Body of pancreas (tissue), 4 donors: ENCODE measurements at regions of chr12 and their contacts with region 1.

Region 1: DNA sequence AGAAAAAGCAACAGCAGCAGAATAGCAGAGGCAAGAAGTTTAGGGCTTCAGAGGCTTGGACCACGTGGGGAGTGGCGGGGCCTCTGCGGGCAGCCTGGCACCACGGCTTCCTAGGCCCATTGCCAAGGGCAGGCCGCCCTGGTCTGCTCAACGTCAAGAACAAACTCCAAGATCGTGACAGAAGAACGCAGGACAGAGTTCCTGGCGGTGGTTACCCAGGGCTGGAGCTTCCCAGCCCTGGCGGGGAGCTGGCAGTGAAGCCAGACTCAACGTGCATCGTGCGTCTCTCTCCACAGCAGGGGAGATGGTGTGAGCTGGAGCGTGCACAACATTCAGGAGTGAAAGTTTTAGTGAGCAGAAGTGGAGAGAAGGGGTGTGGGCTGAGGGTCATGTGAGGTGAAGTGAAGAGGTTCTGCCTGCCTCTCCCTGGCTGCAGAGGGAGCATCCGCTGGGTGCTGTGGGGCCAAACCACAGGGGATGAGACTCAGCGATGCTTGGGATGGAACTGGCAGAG is 13.9 kb upstream of the CACNA2D4 start:
- DNase-seq: peak in 2 of 4 donors; percentile 42 to 49
- ATAC-seq: no peak
- H3K4me3 ChIP-seq: no peak overlapping the region
- H3K27ac ChIP-seq: no peak overlapping the region
- H3K4me1 ChIP-seq: peaks cover 26% of the 10 kb centered on the region
- H3K27me3 ChIP-seq: no peaks in the 10 kb centered on the region
- CTCF ChIP-seq: no peak
- POLR2A ChIP-seq: no peak

Region 2: DNA sequence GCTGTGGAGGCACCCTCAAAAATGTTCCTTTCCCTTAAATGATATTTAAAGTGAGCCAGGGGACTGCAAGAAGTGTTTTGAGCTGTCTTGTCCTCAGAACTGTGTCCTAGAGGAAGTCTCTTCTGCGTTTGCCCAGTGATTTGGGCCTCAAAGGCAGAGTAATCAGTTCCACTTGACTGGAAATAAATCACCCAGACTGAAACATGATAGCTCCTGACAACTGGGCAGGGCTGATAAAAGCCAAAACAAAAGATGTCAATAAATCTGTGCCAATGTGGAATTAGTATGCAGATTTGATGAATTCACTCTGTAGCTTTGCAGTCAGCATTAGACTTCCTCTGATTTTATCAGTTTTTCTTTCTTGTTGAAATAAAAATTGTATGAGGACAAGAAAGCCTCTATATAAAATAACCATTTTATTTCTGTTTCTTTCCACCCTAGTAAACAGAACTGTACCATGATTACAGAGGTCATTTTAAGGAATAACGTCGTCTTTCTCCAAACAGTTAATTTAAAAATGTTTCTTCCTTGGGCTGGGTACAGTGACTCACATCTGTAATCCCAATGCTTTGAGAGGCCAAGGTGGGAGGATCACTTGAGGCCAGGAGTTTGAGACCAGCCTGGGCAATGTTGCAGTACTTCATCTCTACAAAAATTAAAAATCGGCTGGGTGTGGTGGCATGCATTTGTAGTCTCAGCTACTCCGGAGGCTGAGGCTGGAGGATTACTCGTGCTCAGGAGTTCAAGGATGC is 760.5 kb before region 1 on chr12:
- intact Hi-C with region 1: no loop called
- DNase-seq: no peak
- ATAC-seq: no peak
- H3K4me3 ChIP-seq: no peak overlapping the region
- H3K27ac ChIP-seq: no peak overlapping the region
- H3K4me1 ChIP-seq: no peaks in the 10 kb centered on the region
- H3K27me3 ChIP-seq: no peaks in the 10 kb centered on the region
- CTCF ChIP-seq: no peak
- POLR2A ChIP-seq: no peak

Region 3: DNA sequence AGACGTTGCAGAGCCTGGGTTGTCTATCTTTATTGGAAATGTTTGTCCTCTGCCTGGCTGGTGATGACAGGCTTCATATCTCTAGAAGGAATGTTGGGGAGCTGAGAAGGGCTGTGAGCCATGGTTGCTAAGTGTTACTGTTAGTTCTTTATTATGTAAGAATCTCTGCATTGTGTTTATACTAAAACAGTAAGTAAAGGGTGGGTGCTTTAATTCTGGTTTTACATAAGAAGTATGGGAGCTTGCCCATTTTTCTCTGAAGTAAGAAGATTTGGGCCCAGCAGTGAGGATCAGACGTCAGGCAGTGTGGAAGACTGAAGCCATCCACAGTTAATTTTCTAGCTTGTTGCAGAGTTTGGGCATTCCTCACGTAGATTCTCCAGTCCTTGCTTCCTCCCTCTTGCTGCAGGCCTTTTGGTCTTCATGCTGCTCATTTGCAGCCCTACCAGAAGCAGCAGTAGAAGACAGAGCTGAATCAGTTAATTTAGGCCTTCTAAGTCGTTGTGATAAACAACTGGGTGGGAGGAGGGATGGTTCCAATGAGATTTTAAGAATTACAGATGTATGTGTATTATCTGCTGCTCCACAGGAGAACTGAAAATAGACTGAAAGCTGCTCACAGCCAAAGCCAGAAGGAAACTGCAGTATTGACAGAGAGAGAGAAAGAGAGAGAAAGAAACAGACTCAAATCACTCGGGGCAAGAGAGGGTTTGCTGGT is 281.9 kb before region 1 on chr12:
- intact Hi-C with region 1: loop called (anchors 5 kb)
- DNase-seq: no peak
- ATAC-seq: no peak
- H3K4me3 ChIP-seq: no peak overlapping the region
- H3K27ac ChIP-seq: no peak overlapping the region
- H3K4me1 ChIP-seq: no peaks in the 10 kb centered on the region
- H3K27me3 ChIP-seq: no peaks in the 10 kb centered on the region
- CTCF ChIP-seq: no peak
- POLR2A ChIP-seq: no peak

Region 4: DNA sequence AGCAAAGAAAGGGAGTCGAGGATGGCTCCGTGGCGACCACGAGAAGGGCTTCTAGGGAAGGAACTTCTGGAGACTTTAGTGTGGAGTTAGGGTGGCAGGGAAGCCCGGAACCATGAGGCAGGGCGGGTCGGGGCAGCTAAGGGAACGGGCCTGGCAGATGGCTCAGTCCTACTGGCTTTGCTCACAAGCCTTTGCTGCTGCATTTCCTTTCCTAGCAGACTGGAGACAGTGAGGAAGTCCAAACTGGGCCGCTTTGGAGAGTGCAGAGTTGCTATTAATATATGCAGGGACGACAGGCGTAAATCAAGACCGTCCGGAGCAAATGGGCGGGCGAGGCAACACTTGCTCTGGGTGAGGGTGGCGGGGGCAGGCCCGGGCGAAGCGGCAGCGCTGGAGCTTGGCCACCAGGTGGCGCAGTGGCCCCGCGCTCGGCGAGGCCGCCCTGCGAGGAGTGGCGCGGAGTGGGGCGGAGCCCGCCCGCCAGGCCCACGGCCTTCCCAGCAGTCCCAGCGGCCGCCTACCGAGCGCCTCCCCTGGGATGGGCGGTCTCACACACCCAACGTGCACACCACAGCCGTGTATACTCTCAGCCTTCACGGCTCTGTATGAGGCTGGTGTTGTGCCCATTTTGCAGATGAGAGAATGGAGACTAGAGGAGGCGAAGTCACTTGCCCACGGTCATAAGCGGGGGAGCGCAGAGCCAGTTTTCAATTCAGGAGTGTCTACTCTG is 136.4 kb before region 1 on chr12:
- intact Hi-C with region 1: loop called (anchors 5 kb)
- DNase-seq: peak; percentile 92 to 95 (median 94)
- ATAC-seq: peak; percentile 95
- H3K4me3 ChIP-seq: peak overlapping the region; percentile 1 to 3
- H3K27ac ChIP-seq: peak overlapping the region; percentile 32 to 80 (median 58)
- H3K4me1 ChIP-seq: peaks cover 21% of the 10 kb centered on the region
- H3K27me3 ChIP-seq: no peaks in the 10 kb centered on the region
- CTCF ChIP-seq: peak; percentile 79 to 99 (median 98)
- POLR2A ChIP-seq: peak; percentile 49 to 76 (median 72)

Region 5: DNA sequence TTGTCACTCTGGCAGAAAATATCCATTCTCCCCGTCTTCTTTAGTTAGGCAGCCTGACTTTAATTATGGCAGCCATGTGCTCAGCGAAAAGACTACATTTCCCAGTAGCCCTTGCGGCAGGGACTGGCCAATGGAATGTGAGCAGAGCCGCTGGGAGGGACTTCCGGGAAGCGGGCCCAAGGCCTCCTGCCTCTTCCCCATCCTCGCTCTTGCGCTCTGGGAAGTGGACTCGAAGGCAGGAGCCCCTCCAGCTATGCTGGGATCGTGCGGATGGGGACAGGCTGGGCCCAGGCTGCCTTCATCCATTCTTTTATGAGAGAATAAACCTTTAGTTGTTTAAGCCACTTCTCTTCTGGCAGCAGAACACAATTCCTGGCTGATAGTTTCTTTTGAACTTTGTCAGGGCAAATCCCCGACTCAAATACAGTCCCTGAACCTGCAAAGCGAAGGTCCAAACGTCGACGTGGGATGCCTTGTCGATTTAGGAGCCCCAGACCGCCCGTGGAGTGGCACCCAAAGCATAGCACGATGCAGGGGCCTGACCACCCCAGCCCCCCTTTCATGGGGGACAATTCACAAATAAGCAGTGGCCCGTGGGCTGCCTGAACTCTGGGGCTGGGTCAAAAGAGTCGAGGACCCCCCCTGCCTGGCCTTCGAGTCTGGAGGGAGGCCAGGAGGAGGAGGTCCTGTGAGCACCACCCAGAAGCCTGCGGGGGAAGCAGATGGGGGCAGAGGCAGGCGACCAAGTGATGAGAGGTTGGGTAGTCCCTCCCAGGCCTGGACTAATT is 127.6 kb before region 1 on chr12:
- intact Hi-C with region 1: loop called (anchors 5 kb)
- DNase-seq: peak; percentile 69 to 87 (median 74)
- ATAC-seq: peak; percentile 69
- H3K4me3 ChIP-seq: no peak overlapping the region
- H3K27ac ChIP-seq: no peak overlapping the region
- H3K4me1 ChIP-seq: no peaks in the 10 kb centered on the region
- H3K27me3 ChIP-seq: no peaks in the 10 kb centered on the region
- CTCF ChIP-seq: no peak
- POLR2A ChIP-seq: no peak

Region 6: DNA sequence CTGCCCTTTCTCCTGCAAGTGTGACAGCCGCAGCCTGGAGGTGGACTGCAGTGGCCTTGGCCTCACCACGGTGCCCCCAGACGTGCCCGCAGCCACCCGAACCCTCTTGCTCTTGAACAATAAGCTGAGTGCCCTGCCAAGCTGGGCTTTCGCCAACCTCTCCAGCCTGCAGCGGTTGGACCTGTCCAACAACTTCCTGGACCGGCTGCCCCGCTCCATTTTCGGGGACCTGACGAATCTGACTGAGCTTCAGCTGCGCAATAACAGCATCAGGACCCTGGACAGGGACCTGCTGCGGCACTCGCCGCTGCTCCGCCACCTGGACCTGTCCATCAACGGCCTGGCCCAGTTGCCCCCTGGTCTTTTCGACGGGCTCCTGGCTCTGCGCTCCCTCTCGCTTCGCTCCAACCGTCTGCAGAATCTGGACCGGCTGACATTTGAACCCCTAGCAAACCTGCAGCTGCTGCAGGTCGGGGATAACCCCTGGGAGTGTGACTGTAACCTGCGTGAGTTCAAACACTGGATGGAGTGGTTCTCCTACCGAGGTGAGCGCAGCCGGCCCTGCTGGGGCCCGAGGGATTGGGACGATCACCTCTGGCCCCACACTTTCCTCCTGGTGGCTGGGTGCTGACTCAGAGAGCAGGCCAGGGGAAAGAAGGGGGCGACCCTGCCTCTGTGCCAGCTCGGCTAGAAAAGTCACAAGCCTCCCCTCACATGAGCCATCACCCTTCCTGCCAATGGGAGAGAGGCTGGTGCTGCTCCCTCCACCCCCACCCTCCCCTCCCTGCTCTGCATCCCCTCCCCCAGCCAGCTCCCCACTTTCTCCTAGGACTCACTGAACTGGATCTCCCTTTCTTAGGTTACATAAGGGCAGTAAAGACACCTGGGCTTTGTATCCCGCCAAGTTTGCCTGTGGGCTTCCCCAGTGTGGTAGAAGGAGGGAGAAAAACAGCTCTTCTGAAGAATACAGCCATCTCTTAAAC is 101.0 kb before region 1 on chr12:
- intact Hi-C with region 1: no loop called
- DNase-seq: peak; percentile 88 to 95 (median 92)
- ATAC-seq: peak; percentile 94
- H3K4me3 ChIP-seq: no peak overlapping the region
- H3K27ac ChIP-seq: no peak overlapping the region
- H3K4me1 ChIP-seq: peaks cover 16% of the 10 kb centered on the region
- H3K27me3 ChIP-seq: no peaks in the 10 kb centered on the region
- CTCF ChIP-seq: no peak
- POLR2A ChIP-seq: no peak